ENCODE measurements at regions of chr13 and their contacts with region 1.

Region 1: DNA sequence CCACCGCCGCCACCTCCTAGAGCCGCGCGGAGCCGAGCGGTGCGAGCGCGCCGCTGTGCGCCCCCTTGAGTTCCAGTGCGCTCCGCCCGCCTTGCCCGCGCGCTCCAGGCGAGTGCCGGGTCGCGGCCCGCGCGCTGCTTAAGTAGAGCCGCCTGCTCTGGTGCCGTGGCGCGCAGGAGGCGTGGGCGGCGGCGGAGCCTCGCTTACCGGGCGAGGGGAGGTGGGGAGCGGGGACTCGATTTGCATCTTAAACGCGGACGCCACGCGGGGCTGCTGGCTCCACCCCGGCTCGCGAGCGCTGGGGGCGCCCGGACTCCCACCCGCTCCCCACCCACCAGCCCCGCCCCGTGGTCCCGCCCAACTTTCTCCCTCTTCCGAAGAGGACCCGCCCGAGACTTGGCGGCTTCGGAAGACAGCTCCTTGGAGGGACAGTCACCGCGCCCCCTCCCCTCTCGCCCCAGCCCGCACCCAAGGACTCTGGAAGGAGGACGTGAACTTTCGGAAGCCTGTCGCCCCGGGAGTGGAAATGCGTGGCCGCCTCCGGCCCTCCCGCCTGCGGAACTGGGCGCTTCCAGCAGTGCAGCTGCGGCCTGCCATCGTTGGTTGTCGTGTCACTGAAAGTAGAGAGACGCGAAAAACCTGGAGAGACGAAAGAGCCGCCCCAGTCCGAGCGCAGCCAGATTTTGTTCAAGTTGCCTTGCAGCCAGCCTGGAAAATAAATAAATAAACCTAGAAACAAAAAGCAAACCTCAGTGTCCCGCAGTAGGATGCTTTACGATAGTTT is at the start of gene KCTD12:
- DNase-seq: peak; percentile 94 to 97 (median 97)
- ATAC-seq: peak; percentile 89 to 91
- H3K4me3 ChIP-seq: peak within 1 kb of the TSS; percentile 73
- H3K27ac ChIP-seq: peak within 1 kb of the TSS; percentile 86
- H3K4me1 ChIP-seq: peaks cover 2% of the 10 kb centered on the region
- H3K27me3 ChIP-seq: no peaks in the 10 kb centered on the region
- total RNA-seq, gene KCTD12: 37.1 to 57.8 (median 42.0) TPM

Region 2: DNA sequence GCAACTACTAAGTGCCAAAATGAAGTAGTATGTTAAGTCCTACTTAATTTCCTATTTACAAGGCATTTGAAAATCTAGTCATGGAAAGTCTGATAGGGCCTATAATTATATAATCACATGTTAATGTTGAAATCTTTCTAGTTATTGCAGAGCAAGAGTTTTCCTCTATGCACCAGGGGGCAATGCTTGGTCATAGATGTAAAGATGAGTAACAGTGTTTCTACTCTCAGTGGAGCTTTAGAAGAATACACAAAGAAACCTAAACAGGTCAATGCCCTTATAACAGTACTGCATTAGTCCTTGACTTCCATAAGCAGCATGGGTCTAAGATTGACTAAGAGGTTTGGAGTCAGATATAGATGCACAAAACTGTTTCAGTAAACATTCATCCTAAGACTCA is 218.9 kb before region 1 on chr13:
- intact Hi-C with region 1: loop called in 1 of 4 experiments (anchors 5 kb)
- DNase-seq: no peak
- ATAC-seq: peak; percentile 78 to 89
- H3K4me3 ChIP-seq: no peak overlapping the region
- H3K27ac ChIP-seq: no peak overlapping the region
- H3K4me1 ChIP-seq: no peaks in the 10 kb centered on the region
- H3K27me3 ChIP-seq: no peaks in the 10 kb centered on the region

Region 3: GRCh38 chr13:76677043-76677442 is 209.4 kb before region 1 on chr13:
- intact Hi-C with region 1: loop called in 1 of 4 experiments (anchors 5 kb)
- DNase-seq: peak; percentile 68 to 87 (median 84)
- ATAC-seq: peak; percentile 95 to 96
- H3K4me3 ChIP-seq: no peak overlapping the region
- H3K27ac ChIP-seq: no peak overlapping the region
- H3K4me1 ChIP-seq: no peaks in the 10 kb centered on the region
- H3K27me3 ChIP-seq: no peaks in the 10 kb centered on the region

Region 4: GRCh38 chr13:76783798-76784197 is 102.7 kb before region 1 on chr13:
- intact Hi-C with region 1: no loop called
- DNase-seq: no peak
- ATAC-seq: no peak
- H3K4me3 ChIP-seq: no peak overlapping the region
- H3K27ac ChIP-seq: no peak overlapping the region
- H3K4me1 ChIP-seq: no peaks in the 10 kb centered on the region
- H3K27me3 ChIP-seq: no peaks in the 10 kb centered on the region

Region 5: DNA sequence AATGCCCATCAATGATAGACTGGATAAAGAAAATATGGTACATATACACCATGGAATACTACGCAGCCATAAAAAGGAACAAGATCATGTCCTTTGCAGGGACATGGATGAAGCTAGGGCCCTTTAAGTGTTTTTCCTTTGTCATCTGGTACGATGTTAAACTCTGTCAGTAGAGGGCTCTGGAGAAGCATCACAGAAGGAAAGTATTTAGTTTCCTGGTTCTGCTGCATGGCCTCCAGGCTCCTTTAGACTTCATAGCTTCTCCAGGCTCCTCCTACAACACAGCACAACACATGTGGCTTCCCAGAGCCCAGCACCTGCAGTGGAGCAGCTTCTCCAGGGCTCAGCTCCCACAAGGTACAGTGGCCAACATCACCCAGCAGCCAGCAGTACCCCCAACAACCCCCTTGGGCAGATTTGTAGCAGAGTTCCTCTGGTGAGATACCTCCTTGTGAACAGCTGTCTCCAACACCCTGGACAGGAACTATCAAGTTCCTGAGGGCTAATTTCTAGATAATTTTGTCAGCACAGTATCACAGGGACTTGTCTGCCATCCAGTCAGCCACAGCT is 63.7 kb before region 1 on chr13:
- intact Hi-C with region 1: loop called in 1 of 4 experiments (anchors 10 kb)
- DNase-seq: no peak
- ATAC-seq: peak; percentile 46 to 74
- H3K4me3 ChIP-seq: no peak overlapping the region
- H3K27ac ChIP-seq: peak overlapping the region; percentile 56
- H3K4me1 ChIP-seq: peaks cover 2% of the 10 kb centered on the region
- H3K27me3 ChIP-seq: no peaks in the 10 kb centered on the region